ENCODE measurements at regions of chr1 and their contacts with region 1.

Region 1: DNA sequence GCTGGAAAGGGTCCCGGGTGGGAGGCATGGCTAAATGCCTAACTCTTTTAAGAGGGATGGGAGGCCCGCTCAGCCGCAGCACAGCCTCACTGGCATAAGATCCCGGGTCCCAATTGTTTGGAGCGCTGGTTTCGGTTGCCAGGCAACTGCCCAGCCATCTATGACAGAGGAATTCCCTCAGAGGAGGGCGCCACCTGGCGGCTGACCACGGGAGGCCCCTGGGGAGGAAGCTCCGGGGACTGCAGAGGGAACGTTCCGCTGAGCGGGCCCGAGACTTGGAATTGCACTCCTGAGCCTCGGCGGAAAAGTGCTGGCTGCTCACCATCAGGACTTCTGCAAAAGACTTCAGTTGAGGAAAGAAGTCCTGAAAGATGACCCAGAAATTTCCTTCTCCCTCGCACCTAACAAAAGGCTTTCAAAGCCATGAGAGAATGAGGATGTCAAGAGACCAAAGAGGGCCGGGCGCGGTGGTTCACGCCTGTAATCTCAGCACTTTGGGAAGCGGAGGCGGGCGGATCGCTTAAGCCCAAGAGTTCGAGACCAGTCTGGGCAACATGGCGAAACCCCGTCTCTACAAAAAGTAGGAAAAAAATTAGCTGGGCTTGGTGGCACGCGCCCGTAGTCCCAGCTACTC is 1.1 kb upstream of the ELAPOR1 start:
- DNase-seq: peak; percentile 97
- ATAC-seq: peak; percentile 96

Region 2: GRCh38 chr1:108963052-108963686 is 149.6 kb before region 1 on chr1 and contains the start of gene CLCC1:
- intact Hi-C with region 1: loop called (anchors 5 kb)
- DNase-seq: peak; percentile 96
- ATAC-seq: peak; percentile 97
- total RNA-seq, gene CLCC1: 27.6 TPM

Region 3: GRCh38 chr1:109041621-109042468 is 70.9 kb before region 1 on chr1 and contains the start of gene WDR47:
- intact Hi-C with region 1: loop called (anchors 5 kb)
- DNase-seq: peak; percentile 99
- ATAC-seq: peak; percentile 98
- total RNA-seq, gene WDR47: 14.6 TPM

Region 4: GRCh38 chr1:109090196-109091077 is 22.3 kb before region 1 on chr1 and contains the start of gene TMEM167B:
- intact Hi-C with region 1: loop called (anchors 1 kb)
- DNase-seq: peak; percentile 97
- ATAC-seq: peak; percentile 96
- total RNA-seq, gene TMEM167B: 31.5 TPM

Region 5: DNA sequence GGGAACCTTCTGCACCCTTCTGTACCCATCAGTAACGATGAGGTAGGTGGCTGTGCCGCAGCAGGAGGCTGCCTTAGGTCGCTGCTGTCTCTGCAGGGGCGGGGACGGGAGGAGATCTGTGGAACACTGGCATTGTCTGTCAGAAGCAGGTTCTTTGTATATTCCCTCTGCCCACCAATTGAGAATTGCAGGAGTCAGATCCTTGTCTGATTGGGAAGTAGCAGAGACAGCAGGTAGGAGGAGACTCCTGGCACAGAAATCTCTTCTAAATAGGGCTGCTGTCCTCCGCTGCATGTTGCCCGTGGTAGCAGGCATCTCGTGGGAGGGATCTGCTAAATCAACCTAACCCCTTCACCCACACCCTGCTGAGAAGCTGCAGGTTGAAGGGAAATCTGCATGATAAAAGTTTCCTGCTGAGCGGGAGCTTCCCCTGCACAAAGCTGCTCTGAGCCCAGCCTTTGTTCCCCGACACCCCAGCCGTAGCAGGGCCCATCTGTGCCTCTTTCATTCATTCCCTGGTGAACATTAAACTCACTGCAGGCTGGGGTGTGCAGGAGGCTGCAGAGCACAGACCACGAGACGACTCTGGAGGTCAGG is 116.9 kb after region 1 on chr1:
- intact Hi-C with region 1: no loop called
- DNase-seq: no peak
- ATAC-seq: no peak

Region 6: DNA sequence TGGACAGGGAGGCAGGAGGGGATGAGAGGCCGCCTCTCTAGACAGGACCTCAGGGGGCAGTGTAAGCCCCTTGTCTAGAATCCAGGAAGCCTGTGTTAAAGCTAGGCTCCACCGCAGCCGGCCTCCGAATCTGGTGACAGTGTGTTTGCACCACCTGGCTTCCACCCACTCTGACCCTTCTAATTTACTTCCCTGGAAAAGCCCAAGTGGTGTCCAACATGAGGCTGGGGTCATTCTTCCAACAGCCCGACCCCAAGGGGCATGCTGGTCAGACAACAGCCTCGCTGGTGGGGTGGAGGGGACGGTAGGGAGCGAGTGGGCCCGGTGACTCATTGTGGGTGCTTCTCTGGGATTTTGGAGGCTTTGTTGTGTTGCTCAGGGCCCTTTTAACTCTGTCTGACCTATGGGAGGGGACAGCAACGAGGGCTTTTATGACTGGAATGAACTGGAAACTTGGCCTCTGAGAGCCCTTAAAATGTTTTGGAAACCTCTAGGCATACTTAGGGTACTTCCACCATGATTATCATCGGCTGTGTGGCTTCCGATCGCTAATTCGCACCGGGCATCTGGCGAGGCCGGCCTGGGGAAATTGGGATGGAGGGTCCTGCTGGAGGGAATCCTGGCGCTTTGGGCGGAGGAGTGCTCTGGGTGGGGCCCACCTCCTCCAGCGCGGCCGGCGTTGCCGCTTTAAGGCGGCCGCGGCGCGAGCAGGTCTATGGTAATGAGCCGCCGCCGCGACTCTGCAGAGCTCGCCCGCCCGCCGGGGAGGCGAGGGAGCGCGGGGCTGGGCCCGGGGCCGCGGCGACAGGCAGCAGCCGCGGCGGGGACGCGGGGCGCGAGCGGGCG is 136.3 kb after region 1 on chr1 and contains the start of gene CELSR2:
- intact Hi-C with region 1: no loop called
- DNase-seq: peak; percentile 80
- ATAC-seq: peak; percentile 70
- total RNA-seq, gene CELSR2: 6.5 TPM